B cell (primary cell): ENCODE measurements at regions of chr10 and their contacts with region 1.

Region 1: DNA sequence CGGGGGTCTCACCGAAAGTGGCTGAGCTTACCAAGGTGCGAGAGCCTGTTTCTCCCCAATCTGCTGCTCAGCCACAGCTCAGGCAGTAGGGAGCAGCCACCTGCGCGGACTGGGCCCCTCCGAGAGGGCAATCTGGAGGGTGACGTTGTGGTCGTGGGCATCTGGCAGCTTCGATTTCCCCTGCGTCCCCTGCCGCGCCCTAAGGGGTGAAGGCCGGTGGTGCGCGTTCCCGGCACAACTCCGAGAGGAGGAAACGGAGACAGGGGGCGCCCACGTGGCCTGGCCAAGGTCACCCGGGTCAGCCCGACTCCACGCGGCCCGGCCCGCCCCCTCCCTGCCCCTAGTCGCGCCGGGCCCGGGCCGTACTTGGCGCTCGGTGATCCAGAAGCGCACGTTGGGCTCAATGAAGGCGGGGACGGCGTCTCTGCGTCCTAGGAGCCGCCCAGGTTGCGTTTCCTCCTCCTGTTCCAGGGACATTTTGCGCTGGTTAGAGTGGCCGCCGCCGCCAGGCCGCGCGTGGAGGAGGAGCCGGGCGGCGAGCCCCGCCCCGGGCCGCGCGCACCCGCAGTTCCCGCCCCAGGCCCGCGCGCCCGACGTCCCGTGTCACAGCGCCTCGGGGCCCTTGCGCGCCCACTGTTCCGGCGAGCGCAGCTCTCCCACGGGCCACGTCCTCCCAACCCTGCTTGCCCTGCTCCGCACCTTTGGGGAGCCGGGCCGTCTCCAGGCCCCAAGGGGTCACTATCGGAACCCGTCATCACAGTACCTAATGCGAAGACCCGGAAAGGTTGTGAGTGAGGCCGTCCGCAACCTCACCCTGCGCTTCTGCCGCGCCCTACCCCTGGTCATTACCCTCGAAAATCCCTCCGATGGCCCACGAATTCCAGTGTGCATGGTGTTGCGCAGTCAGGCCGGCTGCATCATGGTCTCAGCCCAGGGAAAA is at the start of gene SFXN4:
- DNase-seq: peak; percentile 89
- ATAC-seq: peak; percentile 92
- H3K4me3 ChIP-seq: peak within 1 kb of the TSS; percentile 46 to 86 (median 79)
- H3K4me3 Mint-ChIP-seq: peak within 1 kb of the TSS; percentile 96
- H3K27ac ChIP-seq: peak within 1 kb of the TSS; percentile 72 to 80
- H3K27ac Mint-ChIP-seq: peak within 1 kb of the TSS; percentile 93
- H3K4me1 ChIP-seq: peaks cover 7 to 19% of the 10 kb centered on the region in 2 donors
- H3K4me1 Mint-ChIP-seq: peaks cover 20% of the 10 kb centered on the region
- H3K27me3 ChIP-seq: no peaks in the 10 kb centered on the region
- H3K27me3 Mint-ChIP-seq: no peaks in the 10 kb centered on the region
- CTCF ChIP-seq: no peak
- total RNA-seq, gene SFXN4: 8.4 and 9.8 TPM in 2 replicates

Region 2: GRCh38 chr10:118669020-118669791 is 496.2 kb before region 1 on chr10:
- CTCF ChIA-PET with region 1: no interaction called
- POLR2A ChIA-PET with region 1: no interaction called
- intact Hi-C with region 1: no loop called
- DNase-seq: peak; percentile 35
- ATAC-seq: peak; percentile 43
- H3K4me3 ChIP-seq: no peak overlapping the region
- H3K4me3 Mint-ChIP-seq: peak overlapping the region; percentile 68
- H3K27ac ChIP-seq: no peak overlapping the region
- H3K27ac Mint-ChIP-seq: peak overlapping the region; percentile 61
- H3K4me1 ChIP-seq: peaks cover 10 to 18% of the 10 kb centered on the region in 2 donors
- H3K4me1 Mint-ChIP-seq: peaks cover 16% of the 10 kb centered on the region
- H3K27me3 ChIP-seq: peaks cover 0 to 1% (median 0%) of the 10 kb centered on the region in 4 experiments
- H3K27me3 Mint-ChIP-seq: peaks cover 8% of the 10 kb centered on the region
- CTCF ChIP-seq: no peak

Region 3: DNA sequence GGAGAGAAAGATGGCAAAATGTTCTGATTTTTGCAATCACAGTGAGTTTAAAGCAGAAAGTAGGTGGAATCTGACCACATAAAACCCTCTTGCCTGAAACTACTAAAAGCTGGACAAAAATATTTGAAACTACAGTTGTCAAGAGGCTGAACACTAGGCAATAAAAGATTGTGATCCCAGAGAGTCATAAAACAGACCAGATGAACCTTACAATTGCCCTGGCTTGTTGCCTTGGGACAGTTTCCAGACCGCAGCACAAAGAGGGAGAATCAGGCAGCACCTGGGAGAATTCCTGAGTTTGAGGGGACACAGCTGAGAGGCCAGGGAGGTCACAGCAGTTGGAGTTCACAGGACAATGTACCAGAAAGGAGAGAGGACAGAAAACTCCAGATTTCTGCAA is 243.2 kb before region 1 on chr10:
- CTCF ChIA-PET with region 1: no interaction called
- POLR2A ChIA-PET with region 1: no interaction called
- intact Hi-C with region 1: no loop called
- DNase-seq: no peak
- ATAC-seq: no peak
- H3K4me3 ChIP-seq: no peak overlapping the region
- H3K4me3 Mint-ChIP-seq: no peak overlapping the region
- H3K27ac ChIP-seq: no peak overlapping the region
- H3K27ac Mint-ChIP-seq: no peak overlapping the region
- H3K4me1 ChIP-seq: no peaks in the 10 kb centered on the region
- H3K4me1 Mint-ChIP-seq: no peaks in the 10 kb centered on the region
- H3K27me3 ChIP-seq: peaks cover 0 to 4% (median 0%) of the 10 kb centered on the region in 4 experiments
- H3K27me3 Mint-ChIP-seq: peaks cover 36% of the 10 kb centered on the region
- CTCF ChIP-seq: no peak

Region 4: DNA sequence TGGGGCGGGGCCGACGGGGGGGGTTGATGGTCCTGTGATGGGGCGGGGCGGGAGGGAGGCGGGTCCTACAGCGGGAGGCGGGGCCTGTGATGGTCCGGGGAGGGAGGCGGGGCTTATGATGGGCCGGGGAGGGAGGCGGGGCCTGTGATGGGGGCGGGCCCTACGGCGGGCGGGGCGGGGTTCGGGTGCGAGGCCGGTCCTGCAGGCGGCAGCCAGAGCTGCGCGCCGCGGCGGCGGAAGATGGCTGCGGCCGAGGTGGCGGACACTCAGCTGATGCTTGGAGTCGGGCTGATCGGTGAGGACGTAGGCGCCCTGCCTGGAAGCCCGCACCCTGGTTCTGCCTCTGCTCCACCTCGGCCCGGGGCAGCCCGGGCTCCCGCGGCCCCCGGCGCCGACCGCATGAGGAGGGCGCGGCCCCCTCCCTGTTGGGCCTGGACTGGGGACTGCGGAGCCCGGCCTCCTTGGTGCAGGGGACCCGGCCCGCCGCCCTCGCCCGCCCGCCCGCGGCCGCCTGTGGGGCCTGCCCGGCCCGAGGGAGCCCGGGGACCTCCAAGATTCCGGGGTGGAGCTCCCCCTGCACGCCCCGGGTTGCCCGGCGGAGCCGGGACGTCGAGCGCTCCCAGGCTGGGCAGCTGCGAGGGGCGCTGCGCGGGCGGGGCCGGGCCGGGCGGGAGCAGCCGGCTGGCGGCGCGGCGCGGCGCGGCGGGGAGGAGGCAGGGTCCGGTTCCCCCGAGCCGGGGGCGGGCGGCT is 61.4 kb before region 1 on chr10 and contains the start of gene DENND10:
- CTCF ChIA-PET with region 1: interaction called, 3 read pairs
- POLR2A ChIA-PET with region 1: interaction called, 4 read pairs
- intact Hi-C with region 1: loop called (anchors 1 kb)
- DNase-seq: peak; percentile 86
- ATAC-seq: peak; percentile 89
- H3K4me3 ChIP-seq: peak within 1 kb of the TSS; percentile 38 to 77 (median 68)
- H3K4me3 Mint-ChIP-seq: peak within 1 kb of the TSS; percentile 84
- H3K27ac ChIP-seq: peak within 1 kb of the TSS; percentile 2 to 4
- H3K27ac Mint-ChIP-seq: peak within 1 kb of the TSS; percentile 71
- H3K4me1 ChIP-seq: peaks cover 6 to 12% of the 10 kb centered on the region in 2 donors
- H3K4me1 Mint-ChIP-seq: peaks cover 10% of the 10 kb centered on the region
- H3K27me3 ChIP-seq: no peaks in the 10 kb centered on the region
- H3K27me3 Mint-ChIP-seq: no peaks in the 10 kb centered on the region
- CTCF ChIP-seq: no peak
- total RNA-seq, gene DENND10: 24.4 and 30.0 TPM in 2 replicates

Region 5: DNA sequence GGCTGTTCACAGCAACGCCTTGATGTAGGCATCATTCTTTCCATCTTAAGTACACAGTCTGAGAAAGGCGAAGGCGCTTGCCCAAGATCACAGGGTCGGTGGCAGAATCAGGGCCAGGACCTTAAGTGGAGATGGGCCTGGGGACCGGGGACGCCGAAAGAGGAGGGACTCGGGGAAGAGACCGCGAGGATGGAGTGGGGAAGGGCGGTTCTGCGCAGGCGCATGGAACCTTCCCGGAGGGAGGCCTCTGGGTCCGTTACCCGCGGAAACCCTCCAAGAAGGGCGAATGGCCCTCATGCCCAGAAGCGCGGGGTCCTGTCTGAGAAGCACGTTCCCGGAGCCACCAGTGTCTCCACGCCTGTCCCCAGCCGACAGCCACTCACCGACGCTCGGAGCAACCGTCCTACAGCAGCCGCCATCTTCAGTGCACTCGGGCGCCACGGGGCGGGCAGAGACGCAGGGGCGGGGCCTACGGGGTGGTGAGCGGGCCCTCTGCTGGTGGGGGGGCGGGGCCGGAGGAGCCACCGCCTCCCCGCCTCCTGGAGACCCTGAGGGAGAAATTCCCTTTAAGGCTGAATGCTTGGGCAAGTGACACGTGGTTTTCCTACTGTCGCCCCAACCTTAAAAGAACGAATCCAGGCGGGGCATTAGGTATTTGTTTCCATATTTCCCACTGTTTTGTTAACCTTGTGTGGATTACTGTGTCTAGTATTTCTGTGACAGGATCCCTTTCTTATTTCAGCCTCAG is 13.1 kb after region 1 on chr10 and contains the start of gene PRDX3:
- CTCF ChIA-PET with region 1: interaction called, 4 read pairs
- POLR2A ChIA-PET with region 1: no interaction called
- intact Hi-C with region 1: loop called (anchors 1 kb)
- DNase-seq: peak; percentile 92
- ATAC-seq: peak; percentile 99
- H3K4me3 ChIP-seq: peak within 1 kb of the TSS; percentile 88 to 98 (median 89)
- H3K4me3 Mint-ChIP-seq: peak within 1 kb of the TSS; percentile 94
- H3K27ac ChIP-seq: peak within 1 kb of the TSS; percentile 68 to 71
- H3K27ac Mint-ChIP-seq: peak within 1 kb of the TSS; percentile 90
- H3K4me1 ChIP-seq: peaks cover 11 to 15% of the 10 kb centered on the region in 2 donors
- H3K4me1 Mint-ChIP-seq: peaks cover 28% of the 10 kb centered on the region
- H3K27me3 ChIP-seq: no peaks in the 10 kb centered on the region
- H3K27me3 Mint-ChIP-seq: no peaks in the 10 kb centered on the region
- CTCF ChIP-seq: peak; percentile 29
- total RNA-seq, gene PRDX3: 36.2 and 36.3 TPM in 2 replicates

Region 6: DNA sequence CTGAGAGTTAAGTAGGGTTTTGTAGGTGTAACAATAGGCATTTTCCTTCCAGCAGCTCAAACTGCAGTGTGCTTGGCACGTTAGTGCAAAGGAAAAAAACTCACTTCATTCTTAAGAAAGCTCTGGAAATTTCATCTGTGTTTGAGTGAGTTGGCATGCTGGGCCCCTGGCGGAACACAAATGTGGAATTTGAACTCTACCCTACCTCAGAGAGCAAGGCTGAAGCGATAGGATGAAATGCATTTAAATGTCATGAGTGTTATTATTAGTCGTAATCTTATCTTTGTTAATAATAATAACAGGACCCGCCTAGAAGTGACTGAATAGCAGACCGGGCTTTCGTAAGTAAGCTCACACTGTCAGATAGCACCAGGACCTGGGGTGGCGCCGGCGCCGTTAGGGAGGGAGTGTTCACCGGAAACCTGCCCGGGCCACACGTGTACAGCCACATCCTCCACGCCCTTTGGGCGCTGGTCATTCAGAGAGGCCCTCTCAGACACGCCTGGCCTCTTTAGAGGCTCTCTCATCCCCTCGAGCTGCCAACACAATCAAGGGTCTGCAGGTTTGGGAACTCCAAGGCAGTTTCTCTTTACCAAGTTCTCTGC is 105.4 kb after region 1 on chr10:
- CTCF ChIA-PET with region 1: no interaction called
- POLR2A ChIA-PET with region 1: no interaction called
- intact Hi-C with region 1: loop called (anchors 5 kb)
- DNase-seq: peak; percentile 77
- ATAC-seq: peak; percentile 39
- H3K4me3 ChIP-seq: peak overlapping the region in 4 of 5 experiments; percentile 15 to 42 (median 31)
- H3K4me3 Mint-ChIP-seq: peak overlapping the region; percentile 73
- H3K27ac ChIP-seq: peak overlapping the region; percentile 98 to 99
- H3K27ac Mint-ChIP-seq: peak overlapping the region; percentile 97
- H3K4me1 ChIP-seq: peaks cover 54 to 78% of the 10 kb centered on the region in 2 donors
- H3K4me1 Mint-ChIP-seq: peaks cover 76% of the 10 kb centered on the region
- H3K27me3 ChIP-seq: no peaks in the 10 kb centered on the region
- H3K27me3 Mint-ChIP-seq: no peaks in the 10 kb centered on the region
- CTCF ChIP-seq: no peak